Activated B cell treated with CpG ODN at 0.5 μM for 24 hours (primary cell): ENCODE measurements at regions of chr5 and their contacts with region 1.

Region 1: GRCh38 chr5:157130925-157131324 is 11.7 kb downstream of the MED7 start:
- DNase-seq: no peak
- ATAC-seq: peak; percentile 62
- H3K4me3 Mint-ChIP-seq: no peak overlapping the region
- H3K27ac Mint-ChIP-seq: no peak overlapping the region
- H3K4me1 Mint-ChIP-seq: peaks cover 10% of the 10 kb centered on the region
- H3K27me3 Mint-ChIP-seq: no peaks in the 10 kb centered on the region
- CTCF ChIP-seq: no peak

Region 2: GRCh38 chr5:155140651-155141050 is 1990.3 kb before region 1 on chr5:
- CTCF ChIA-PET with region 1: interaction called, 19 read pairs
- POLR2A ChIA-PET with region 1: no interaction called
- intact Hi-C with region 1: no loop called
- DNase-seq: no peak
- ATAC-seq: no peak
- H3K4me3 Mint-ChIP-seq: no peak overlapping the region
- H3K27ac Mint-ChIP-seq: no peak overlapping the region
- H3K4me1 Mint-ChIP-seq: no peaks in the 10 kb centered on the region
- H3K27me3 Mint-ChIP-seq: peaks cover 11% of the 10 kb centered on the region
- CTCF ChIP-seq: no peak

Region 3: GRCh38 chr5:155700333-155700732 is 1430.6 kb before region 1 on chr5:
- CTCF ChIA-PET with region 1: interaction called, 5 read pairs
- POLR2A ChIA-PET with region 1: no interaction called
- intact Hi-C with region 1: loop called (anchors 5 kb)
- DNase-seq: no peak
- ATAC-seq: no peak
- H3K4me3 Mint-ChIP-seq: no peak overlapping the region
- H3K27ac Mint-ChIP-seq: no peak overlapping the region
- H3K4me1 Mint-ChIP-seq: no peaks in the 10 kb centered on the region
- H3K27me3 Mint-ChIP-seq: no peaks in the 10 kb centered on the region
- CTCF ChIP-seq: no peak

Region 4: DNA sequence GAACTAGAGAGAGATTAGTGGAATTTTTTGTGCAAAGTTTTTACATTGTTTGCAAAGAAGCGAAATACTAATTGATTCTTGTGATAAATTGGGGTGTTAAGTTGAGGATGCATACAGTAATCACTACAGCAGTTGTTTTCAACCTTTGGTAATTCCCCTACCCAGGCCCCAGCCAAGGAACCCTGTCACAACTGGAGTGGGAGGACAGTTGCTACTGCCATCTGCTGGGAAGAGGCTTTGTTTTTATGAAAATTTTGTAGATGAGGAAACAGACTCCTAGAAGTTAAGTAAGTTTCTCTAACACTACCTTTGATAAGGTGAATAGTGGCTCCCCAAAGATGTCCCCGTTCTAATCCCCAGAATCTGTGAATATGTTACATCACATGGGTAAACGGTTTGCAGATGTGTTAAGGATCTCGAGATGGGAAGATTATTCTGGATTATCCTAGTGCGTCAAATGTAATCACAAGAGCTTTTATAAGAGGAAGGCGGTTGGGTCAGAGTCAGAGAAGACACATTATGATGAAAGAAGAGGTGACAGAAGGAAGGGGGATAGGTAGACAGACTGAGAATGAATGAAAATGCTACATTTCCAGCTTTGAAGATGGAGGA is 314.8 kb before region 1 on chr5:
- CTCF ChIA-PET with region 1: no interaction called
- POLR2A ChIA-PET with region 1: no interaction called
- intact Hi-C with region 1: loop called (anchors 5 kb)
- DNase-seq: no peak
- ATAC-seq: no peak
- H3K4me3 Mint-ChIP-seq: no peak overlapping the region
- H3K27ac Mint-ChIP-seq: no peak overlapping the region
- H3K4me1 Mint-ChIP-seq: no peaks in the 10 kb centered on the region
- H3K27me3 Mint-ChIP-seq: peaks cover 3% of the 10 kb centered on the region
- CTCF ChIP-seq: peak; percentile 13

Region 5: DNA sequence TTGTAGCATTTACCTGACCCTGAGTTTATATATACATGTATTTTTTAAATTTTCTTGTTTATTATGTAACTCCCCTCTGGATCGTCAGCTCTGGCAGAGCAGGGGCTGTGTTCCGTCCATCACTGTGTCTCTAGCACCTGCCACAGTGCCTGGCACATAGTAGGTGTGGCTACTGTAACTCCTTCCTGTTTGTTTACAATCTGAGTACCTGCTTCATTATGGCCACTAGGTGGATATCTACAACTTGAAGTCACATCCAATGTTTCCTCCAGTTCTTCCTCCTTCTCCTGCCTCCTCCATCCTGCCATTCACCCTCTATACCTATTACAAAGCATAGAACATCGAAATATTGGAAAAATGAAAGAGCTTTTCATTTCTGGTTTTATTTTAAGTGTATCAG is 295.0 kb before region 1 on chr5:
- CTCF ChIA-PET with region 1: no interaction called
- POLR2A ChIA-PET with region 1: no interaction called
- intact Hi-C with region 1: loop called (anchors 5 kb)
- DNase-seq: no peak
- ATAC-seq: no peak
- H3K4me3 Mint-ChIP-seq: no peak overlapping the region
- H3K27ac Mint-ChIP-seq: no peak overlapping the region
- H3K4me1 Mint-ChIP-seq: no peaks in the 10 kb centered on the region
- H3K27me3 Mint-ChIP-seq: peaks cover 7% of the 10 kb centered on the region
- CTCF ChIP-seq: no peak

Region 6: GRCh38 chr5:156934450-156935211 is 196.3 kb before region 1 on chr5:
- CTCF ChIA-PET with region 1: no interaction called
- POLR2A ChIA-PET with region 1: no interaction called
- intact Hi-C with region 1: loop called (anchors 1 kb)
- DNase-seq: no peak
- ATAC-seq: no peak
- H3K4me3 Mint-ChIP-seq: no peak overlapping the region
- H3K27ac Mint-ChIP-seq: no peak overlapping the region
- H3K4me1 Mint-ChIP-seq: peaks cover 7% of the 10 kb centered on the region
- H3K27me3 Mint-ChIP-seq: no peaks in the 10 kb centered on the region
- CTCF ChIP-seq: no peak

Region 7: DNA sequence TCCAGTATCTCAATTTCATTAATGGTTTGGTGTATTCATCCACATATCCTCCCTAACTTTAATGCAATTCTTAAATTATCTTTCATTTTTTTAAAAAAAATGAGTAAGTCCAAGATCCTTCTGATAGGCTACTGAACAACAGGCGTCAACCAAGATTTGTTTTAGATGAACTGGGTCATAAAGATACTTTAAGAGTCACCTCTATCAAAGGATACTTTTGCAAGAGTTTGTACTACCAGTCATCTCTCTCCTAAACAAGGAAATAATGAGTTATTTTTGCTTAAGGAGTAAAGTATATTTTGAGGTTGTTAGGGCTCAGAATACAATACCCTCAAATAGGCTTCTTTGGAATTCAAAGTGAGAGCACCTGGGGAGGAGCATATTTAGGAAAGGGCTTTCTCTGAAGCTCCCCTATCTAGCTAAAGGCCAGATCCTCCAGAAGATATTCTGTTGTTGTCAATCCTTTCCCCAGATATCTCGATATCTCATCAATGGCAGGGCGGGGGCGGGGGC is 97.8 kb before region 1 on chr5:
- CTCF ChIA-PET with region 1: no interaction called
- POLR2A ChIA-PET with region 1: no interaction called
- intact Hi-C with region 1: no loop called
- DNase-seq: no peak
- ATAC-seq: no peak
- H3K4me3 Mint-ChIP-seq: no peak overlapping the region
- H3K27ac Mint-ChIP-seq: no peak overlapping the region
- H3K4me1 Mint-ChIP-seq: peaks cover 2% of the 10 kb centered on the region
- H3K27me3 Mint-ChIP-seq: peaks cover 7% of the 10 kb centered on the region
- CTCF ChIP-seq: no peak

Region 8: GRCh38 chr5:157100140-157100679 is 30.7 kb before region 1 on chr5:
- CTCF ChIA-PET with region 1: no interaction called
- POLR2A ChIA-PET with region 1: no interaction called
- intact Hi-C with region 1: no loop called
- DNase-seq: no peak
- ATAC-seq: no peak
- H3K4me3 Mint-ChIP-seq: no peak overlapping the region
- H3K27ac Mint-ChIP-seq: no peak overlapping the region
- H3K4me1 Mint-ChIP-seq: peaks cover 3% of the 10 kb centered on the region
- H3K27me3 Mint-ChIP-seq: no peaks in the 10 kb centered on the region
- CTCF ChIP-seq: no peak